ENCODE measurements at regions of chr10 and their contacts with region 1.

Region 1: DNA sequence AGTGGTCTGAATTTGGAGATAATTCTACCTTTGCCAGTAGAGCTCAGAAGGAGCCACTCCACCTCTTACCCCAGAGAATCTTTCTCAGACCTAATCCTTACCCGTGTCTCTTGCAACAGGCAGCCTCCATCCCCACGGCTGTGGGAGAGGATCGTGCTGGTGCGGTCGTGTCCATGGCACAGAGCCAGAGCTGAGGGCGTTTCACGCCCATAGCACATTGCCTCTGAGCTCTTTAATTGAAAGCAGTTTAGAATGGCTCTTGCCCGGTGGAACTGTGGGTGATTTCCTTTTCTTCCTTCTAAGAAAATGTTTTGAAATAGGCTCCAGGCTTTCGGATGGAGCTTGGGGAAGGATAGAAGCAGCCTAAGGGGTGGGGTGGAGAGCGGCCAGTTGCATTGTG is 41.5 kb downstream of the PRF1 start:
- DNase-seq: peak; percentile 79

Region 2: GRCh38 chr10:70664702-70665195 is 103.7 kb after region 1 on chr10:
- intact Hi-C with region 1: loop called in 1 of 2 experiments (anchors 5 kb)
- DNase-seq: no peak

Region 3: GRCh38 chr10:70774810-70775678 is 214.0 kb after region 1 on chr10:
- intact Hi-C with region 1: loop called in 1 of 2 experiments (anchors 5 kb)
- DNase-seq: no peak